Right ventricle myocardium superior (tissue), 1 donor: ENCODE measurements at regions of chr1 and their contacts with region 1.

Region 1: GRCh38 chr1:32311709-32312393 is 20.0 kb downstream of the HDAC1 start:
- DNase-seq: no peak
- ATAC-seq: no peak

Region 2: DNA sequence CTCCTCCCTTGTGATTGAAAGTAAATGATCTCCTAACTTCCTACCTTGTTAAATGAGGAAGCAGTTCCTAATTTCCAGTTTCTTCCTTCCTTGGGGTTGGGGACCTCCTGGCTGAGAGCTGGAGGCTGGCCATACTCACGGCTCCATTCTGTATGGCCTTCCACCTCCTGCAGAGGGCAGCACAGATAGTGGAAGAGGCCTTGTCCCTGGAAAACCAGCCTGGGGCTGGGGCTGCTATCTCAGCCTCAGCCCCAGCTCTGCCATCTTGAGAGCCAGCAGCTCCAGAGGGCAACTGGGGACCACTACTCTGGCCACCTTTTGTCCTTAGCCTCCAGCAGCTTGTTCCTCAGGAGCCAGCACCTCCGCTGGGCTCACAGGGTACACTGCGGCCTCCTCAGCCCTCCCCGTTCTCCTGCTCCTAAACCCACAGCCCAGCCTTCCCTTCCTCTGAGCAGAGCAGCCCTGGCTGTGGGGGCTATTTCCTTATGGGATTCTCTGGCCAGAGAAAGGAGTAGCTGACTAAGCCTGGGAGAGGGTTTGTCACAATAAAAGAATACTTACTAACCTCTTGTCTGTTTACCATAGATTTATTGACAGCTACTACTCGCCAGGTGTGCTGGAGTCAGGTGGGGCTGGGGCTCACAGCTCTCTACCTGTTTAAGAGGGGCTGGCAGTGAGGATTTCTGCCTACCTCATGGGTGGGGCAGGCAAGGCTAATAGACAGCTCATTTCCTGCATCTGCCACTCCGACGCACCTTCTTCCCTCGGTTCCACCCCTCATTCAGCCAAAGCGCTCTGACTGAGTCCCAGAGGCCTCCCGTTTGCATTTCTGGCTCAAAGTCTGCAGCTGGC is 96.0 kb before region 1 on chr1:
- intact Hi-C with region 1: loop called (anchors 5 kb)
- DNase-seq: peak; percentile 67
- ATAC-seq: peak; percentile 66